Mucosa of descending colon (tissue), 3 donors: ENCODE measurements at regions of chr17 and their contacts with region 1.

Region 1: GRCh38 chr17:34998205-34998604 is 17.9 kb downstream of the LIG3 start:
- DNase-seq: peak; percentile 78 to 87 (median 80)
- ATAC-seq: peak; percentile 93
- H3K4me3 ChIP-seq: no peak overlapping the region
- H3K4me1 ChIP-seq: no peaks in the 10 kb centered on the region
- CTCF ChIP-seq: peak; percentile 74

Region 2: DNA sequence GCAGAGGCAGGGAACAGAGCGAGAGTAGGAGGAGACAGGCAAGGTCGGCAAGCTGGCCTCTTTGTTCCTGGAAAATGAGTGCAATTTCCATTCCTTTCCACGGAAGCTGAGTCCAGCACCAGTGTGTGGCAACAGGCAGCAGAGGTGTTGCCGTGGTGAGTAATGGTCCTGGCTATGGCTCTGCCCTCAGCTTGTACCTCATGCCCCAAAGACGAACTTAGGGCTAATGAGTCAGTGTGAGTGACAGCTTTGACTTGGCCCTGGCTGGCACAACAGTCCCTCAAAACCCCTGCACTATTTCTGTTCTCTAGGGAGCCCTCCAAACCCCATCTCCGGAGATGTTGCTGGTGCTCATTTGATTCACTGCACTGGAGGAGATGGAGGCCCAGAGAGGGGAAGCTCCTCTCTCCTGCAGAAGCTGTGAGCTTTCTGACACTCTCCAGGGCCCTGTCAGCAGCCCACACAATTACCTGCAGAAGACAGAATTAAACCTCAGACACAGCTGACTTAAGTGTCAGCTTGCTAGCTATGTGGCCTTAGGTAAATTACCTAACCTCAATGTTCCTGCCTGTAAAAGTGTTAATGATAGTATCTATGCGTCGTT is 289.0 kb before region 1 on chr17:
- intact Hi-C with region 1: no loop called
- DNase-seq: no peak
- ATAC-seq: no peak
- H3K4me3 ChIP-seq: no peak overlapping the region
- H3K4me1 ChIP-seq: no peaks in the 10 kb centered on the region
- CTCF ChIP-seq: no peak

Region 3: DNA sequence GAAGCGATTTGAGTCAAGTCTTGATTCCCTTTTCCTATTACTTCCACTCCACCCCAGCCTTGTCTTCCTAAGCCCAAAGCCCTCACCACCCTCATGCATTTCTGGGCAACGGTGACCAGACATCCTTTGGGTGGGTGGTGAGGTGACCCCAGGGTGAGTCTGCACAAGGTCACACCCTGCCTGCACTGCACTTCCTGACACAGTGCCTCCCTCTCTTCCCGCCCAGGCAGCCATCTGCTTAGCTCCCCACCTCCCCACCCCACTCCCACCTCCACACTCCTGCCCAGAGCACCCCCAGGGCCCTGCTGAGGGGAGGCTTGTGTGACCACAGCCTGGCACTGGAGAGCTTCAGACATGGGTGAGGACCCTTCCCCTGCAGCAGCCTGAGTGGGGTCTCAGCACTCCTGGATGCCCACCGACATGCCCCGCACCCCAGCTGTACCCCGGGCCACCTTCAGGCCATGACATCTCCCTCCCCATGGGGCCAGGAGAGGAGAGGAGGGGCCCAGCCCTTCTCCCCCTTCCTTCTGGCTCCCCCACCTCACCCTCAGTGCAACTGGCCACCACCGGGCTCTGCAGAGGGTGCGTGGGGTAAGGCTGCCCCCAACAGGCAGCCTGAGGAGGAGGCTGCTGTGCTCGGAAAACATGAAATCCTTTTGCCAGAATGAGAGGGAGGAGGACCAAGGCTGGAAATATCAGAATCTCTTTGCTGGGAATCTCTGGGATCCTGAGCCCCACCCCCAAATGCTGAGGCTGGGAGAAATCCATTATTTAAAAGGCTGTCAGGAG is 105.5 kb before region 1 on chr17:
- intact Hi-C with region 1: no loop called
- DNase-seq: no peak
- ATAC-seq: no peak
- H3K4me3 ChIP-seq: no peak overlapping the region
- H3K4me1 ChIP-seq: no peaks in the 10 kb centered on the region
- CTCF ChIP-seq: no peak

Region 4: GRCh38 chr17:35063514-35064223 is 65.5 kb after region 1 on chr17 and contains the start of gene RFFL:
- intact Hi-C with region 1: no loop called
- DNase-seq: peak; percentile 75 to 90 (median 85)
- ATAC-seq: peak; percentile 99
- H3K4me3 ChIP-seq: no peak within 1 kb of the TSS
- H3K4me1 ChIP-seq: peaks cover 13% of the 10 kb centered on the region
- CTCF ChIP-seq: no peak
- total RNA-seq, gene RFFL: 45.2 to 69.1 (median 64.1) TPM

Region 5: GRCh38 chr17:35089586-35090296 is 91.5 kb after region 1 on chr17:
- intact Hi-C with region 1: loop called in 1 of 2 experiments (anchors 10 kb)
- DNase-seq: peak in 1 of 3 donors; percentile 32
- ATAC-seq: peak; percentile 12
- H3K4me3 ChIP-seq: no peak overlapping the region
- H3K4me1 ChIP-seq: peaks cover 28% of the 10 kb centered on the region
- CTCF ChIP-seq: no peak

Region 6: GRCh38 chr17:35119368-35120165 is 121.4 kb after region 1 on chr17 and contains the start of gene RAD51D:
- intact Hi-C with region 1: loop called in 1 of 2 experiments (anchors 5 kb)
- DNase-seq: peak; percentile 74 to 85 (median 80)
- ATAC-seq: peak; percentile 99
- H3K4me3 ChIP-seq: peak within 1 kb of the TSS; percentile 57
- H3K4me1 ChIP-seq: peaks cover 9% of the 10 kb centered on the region
- CTCF ChIP-seq: peak; percentile 91
- total RNA-seq, gene RAD51D: 9.1 to 14.4 (median 11.6) TPM